Prostate gland (tissue), 2 donors: ENCODE measurements at regions of chr10 and their contacts with region 1.

Region 1: GRCh38 chr10:67519434-67519833 is 176.6 kb downstream of the CTNNA3 start:
- DNase-seq: no peak
- H3K4me3 ChIP-seq: no peak overlapping the region
- H3K27ac ChIP-seq: no peak overlapping the region
- H3K4me1 ChIP-seq: no peaks in the 10 kb centered on the region
- H3K27me3 ChIP-seq: no peaks in the 10 kb centered on the region
- CTCF ChIP-seq: no peak
- POLR2A ChIP-seq: no peak

Region 2: DNA sequence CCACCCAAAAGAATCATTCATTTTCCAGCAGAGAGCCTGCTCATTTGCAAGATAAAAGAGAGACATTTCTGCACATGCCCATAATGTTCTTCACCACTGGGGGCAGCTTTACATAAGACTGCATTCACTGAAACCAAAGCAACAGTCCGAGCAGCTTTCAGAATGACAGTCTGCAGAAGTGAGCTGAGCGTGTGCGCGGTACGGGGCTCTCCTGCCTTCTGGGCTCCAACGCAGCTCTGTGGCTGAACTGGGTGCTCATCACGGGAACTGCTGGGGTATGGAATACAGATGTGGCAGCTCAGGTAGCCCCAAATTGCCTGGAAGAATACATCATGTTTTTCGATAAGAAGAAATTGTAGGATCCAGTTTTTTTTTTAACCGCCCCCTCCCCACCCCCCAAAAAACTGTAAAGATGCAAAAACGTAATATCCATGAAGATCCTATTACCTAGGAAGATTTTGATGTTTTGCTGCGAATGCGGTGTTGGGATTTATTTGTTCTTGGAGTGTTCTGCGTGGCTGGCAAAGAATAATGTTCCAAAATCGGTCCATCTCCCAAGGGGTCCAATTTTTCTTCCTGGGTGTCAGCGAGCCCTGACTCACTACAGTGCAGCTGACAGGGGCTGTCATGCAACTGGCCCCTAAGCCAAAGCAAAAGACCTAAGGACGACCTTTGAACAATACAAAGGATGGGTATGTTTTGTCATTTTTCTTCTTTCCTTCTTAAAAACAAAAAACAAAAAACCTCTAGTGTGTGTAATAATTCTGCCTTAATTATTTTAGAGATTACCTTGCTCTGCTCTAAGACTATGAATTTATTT is 593.3 kb before region 1 on chr10 and contains the start of gene LRRTM3:
- intact Hi-C with region 1: loop called (anchors 10 kb)
- DNase-seq: peak; percentile 20
- H3K4me3 ChIP-seq: no peak within 1 kb of the TSS
- H3K27ac ChIP-seq: no peak within 1 kb of the TSS
- H3K4me1 ChIP-seq: no peaks in the 10 kb centered on the region
- H3K27me3 ChIP-seq: peaks cover 8% of the 10 kb centered on the region
- CTCF ChIP-seq: peak in 3 of 4 experiments; percentile 24 to 42 (median 33)
- POLR2A ChIP-seq: no peak
- total RNA-seq, gene LRRTM3: 0.14 to 2.3 TPM

Region 3: DNA sequence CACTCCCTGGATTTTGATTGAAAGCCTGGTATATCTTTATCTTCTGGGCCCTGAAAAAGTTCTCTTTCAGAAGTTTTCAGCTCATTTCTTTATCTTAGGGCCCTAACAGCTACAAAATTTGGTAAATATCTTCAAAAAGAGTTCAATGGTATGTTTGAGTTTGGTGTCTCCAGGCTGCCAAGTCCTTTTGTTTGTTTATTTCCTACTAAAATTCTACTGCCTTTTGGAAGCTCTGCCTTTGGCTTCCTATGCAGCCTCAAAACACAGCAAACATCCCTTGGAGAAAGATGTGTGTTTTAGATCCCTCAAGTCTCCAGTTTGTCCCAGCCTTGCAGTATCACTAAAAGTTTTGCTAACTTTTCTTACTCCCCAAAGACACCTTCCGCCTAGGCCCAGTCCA is 446.8 kb before region 1 on chr10:
- intact Hi-C with region 1: no loop called
- DNase-seq: no peak
- H3K4me3 ChIP-seq: no peak overlapping the region
- H3K27ac ChIP-seq: no peak overlapping the region
- H3K4me1 ChIP-seq: no peaks in the 10 kb centered on the region
- H3K27me3 ChIP-seq: no peaks in the 10 kb centered on the region
- CTCF ChIP-seq: no peak
- POLR2A ChIP-seq: no peak

Region 4: GRCh38 chr10:67575532-67575931 is 56.1 kb after region 1 on chr10:
- intact Hi-C with region 1: no loop called
- DNase-seq: no peak
- H3K4me3 ChIP-seq: no peak overlapping the region
- H3K27ac ChIP-seq: no peak overlapping the region
- H3K4me1 ChIP-seq: no peaks in the 10 kb centered on the region
- H3K27me3 ChIP-seq: no peaks in the 10 kb centered on the region
- CTCF ChIP-seq: no peak
- POLR2A ChIP-seq: no peak